Naive thymus-derived CD4-positive, alpha-beta T cell (primary cell): ENCODE measurements at regions of chr5 and their contacts with region 1.

Region 1: GRCh38 chr5:115246361-115246991 is 16.2 kb downstream of the PGGT1B start:
- DNase-seq: peak in 6 of 9 donors; percentile 8 to 36 (median 18)
- ATAC-seq: peak; percentile 77
- H3K4me3 ChIP-seq: no peak overlapping the region
- H3K4me3 Mint-ChIP-seq: no peak overlapping the region
- H3K27ac ChIP-seq: no peak overlapping the region
- H3K27ac Mint-ChIP-seq: peak overlapping the region in 1 of 9 donors; percentile 1
- H3K4me1 ChIP-seq: no peaks in the 10 kb centered on the region
- H3K4me1 Mint-ChIP-seq: peaks cover 7 to 38% (median 20%) of the 10 kb centered on the region in 7 donors
- H3K27me3 ChIP-seq: no peaks in the 10 kb centered on the region
- H3K27me3 Mint-ChIP-seq: no peaks in the 10 kb centered on the region

Region 2: GRCh38 chr5:113678924-113679575 is 1567.4 kb before region 1 on chr5:
- CTCF ChIA-PET with region 1: no interaction called
- POLR2A ChIA-PET with region 1: no interaction called
- intact Hi-C with region 1: loop called in 1 of 2 experiments (anchors 10 kb)
- DNase-seq: peak in 4 of 9 donors; percentile 1 to 22 (median 4)
- ATAC-seq: peak; percentile 36
- H3K4me3 ChIP-seq: no peak overlapping the region
- H3K4me3 Mint-ChIP-seq: no peak overlapping the region
- H3K27ac ChIP-seq: no peak overlapping the region
- H3K27ac Mint-ChIP-seq: no peak overlapping the region
- H3K4me1 ChIP-seq: no peaks in the 10 kb centered on the region
- H3K4me1 Mint-ChIP-seq: no peaks in the 10 kb centered on the region
- H3K27me3 ChIP-seq: no peaks in the 10 kb centered on the region
- H3K27me3 Mint-ChIP-seq: peaks cover 0 to 7% (median 4%) of the 10 kb centered on the region in 5 donors

Region 3: GRCh38 chr5:114727358-114727757 is 519.1 kb before region 1 on chr5:
- CTCF ChIA-PET with region 1: no interaction called
- POLR2A ChIA-PET with region 1: no interaction called
- intact Hi-C with region 1: no loop called
- DNase-seq: no peak
- ATAC-seq: no peak
- H3K4me3 ChIP-seq: no peak overlapping the region
- H3K4me3 Mint-ChIP-seq: no peak overlapping the region
- H3K27ac ChIP-seq: no peak overlapping the region
- H3K27ac Mint-ChIP-seq: no peak overlapping the region
- H3K4me1 ChIP-seq: no peaks in the 10 kb centered on the region
- H3K4me1 Mint-ChIP-seq: no peaks in the 10 kb centered on the region
- H3K27me3 ChIP-seq: no peaks in the 10 kb centered on the region
- H3K27me3 Mint-ChIP-seq: peaks cover 0 to 5% (median 0%) of the 10 kb centered on the region in 5 donors

Region 4: DNA sequence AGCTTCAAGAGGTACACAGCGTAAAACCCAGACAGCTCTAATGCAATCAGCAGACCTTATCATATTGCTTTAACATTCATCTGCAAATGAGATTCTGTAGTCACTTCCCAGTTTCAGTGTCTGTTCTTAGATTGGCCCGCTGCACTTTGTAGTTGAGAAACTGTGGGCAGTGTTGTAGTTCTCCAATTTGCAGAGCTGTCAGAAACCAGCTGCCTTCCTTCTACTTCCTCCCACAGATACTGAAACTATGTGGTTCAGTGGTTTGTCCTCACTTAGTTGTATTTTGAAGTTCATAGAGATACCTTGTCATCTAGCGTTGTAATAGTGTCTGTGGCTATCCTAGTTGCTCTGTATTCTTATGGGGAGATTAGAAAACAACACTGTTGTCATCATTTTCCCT is 37.2 kb before region 1 on chr5:
- CTCF ChIA-PET with region 1: no interaction called
- POLR2A ChIA-PET with region 1: no interaction called
- intact Hi-C with region 1: loop called in 1 of 2 experiments (anchors 1 kb)
- DNase-seq: peak in 8 of 9 donors; percentile 1 to 45 (median 15)
- ATAC-seq: peak; percentile 97
- H3K4me3 ChIP-seq: no peak overlapping the region
- H3K4me3 Mint-ChIP-seq: peak overlapping the region in 1 of 10 donors; percentile 77
- H3K27ac ChIP-seq: no peak overlapping the region
- H3K27ac Mint-ChIP-seq: peak overlapping the region in 3 of 9 donors; percentile 6 to 74 (median 62)
- H3K4me1 ChIP-seq: no peaks in the 10 kb centered on the region
- H3K4me1 Mint-ChIP-seq: peaks cover 5 to 19% (median 12%) of the 10 kb centered on the region in 7 donors
- H3K27me3 ChIP-seq: no peaks in the 10 kb centered on the region
- H3K27me3 Mint-ChIP-seq: no peaks in the 10 kb centered on the region

Region 5: GRCh38 chr5:115634343-115635132 is 388.1 kb after region 1 on chr5:
- CTCF ChIA-PET with region 1: no interaction called
- POLR2A ChIA-PET with region 1: no interaction called
- intact Hi-C with region 1: no loop called
- DNase-seq: peak; percentile 59 to 75 (median 67)
- ATAC-seq: peak; percentile 97
- H3K4me3 ChIP-seq: peak overlapping the region; percentile 18
- H3K4me3 Mint-ChIP-seq: peak overlapping the region; percentile 59 to 87 (median 80)
- H3K27ac ChIP-seq: no peak overlapping the region
- H3K27ac Mint-ChIP-seq: peak overlapping the region in 6 of 9 donors; percentile 6 to 67 (median 43)
- H3K4me1 ChIP-seq: no peaks in the 10 kb centered on the region
- H3K4me1 Mint-ChIP-seq: peaks cover 0 to 44% (median 7%) of the 10 kb centered on the region in 7 donors
- H3K27me3 ChIP-seq: no peaks in the 10 kb centered on the region
- H3K27me3 Mint-ChIP-seq: peaks cover 0 to 66% (median 0%) of the 10 kb centered on the region in 5 donors